Calu3 (cell line): ENCODE measurements at regions of chr4 and their contacts with region 1.

Region 1: GRCh38 chr4:34826660-34827059 is 1417.7 kb downstream of the ARAP2 start:
- DNase-seq: no peak
- H3K4me3 Mint-ChIP-seq: no peak overlapping the region
- H3K27ac Mint-ChIP-seq: no peak overlapping the region
- H3K4me1 Mint-ChIP-seq: no peaks in the 10 kb centered on the region
- H3K27me3 Mint-ChIP-seq: no peaks in the 10 kb centered on the region
- CTCF ChIP-seq: no peak

Region 2: GRCh38 chr4:34676390-34676789 is 150.3 kb before region 1 on chr4:
- CTCF ChIA-PET with region 1: interaction called, 11 read pairs
- intact Hi-C with region 1: no loop called
- DNase-seq: no peak
- H3K4me3 Mint-ChIP-seq: no peak overlapping the region
- H3K27ac Mint-ChIP-seq: no peak overlapping the region
- H3K4me1 Mint-ChIP-seq: no peaks in the 10 kb centered on the region
- H3K27me3 Mint-ChIP-seq: no peaks in the 10 kb centered on the region
- CTCF ChIP-seq: no peak

Region 3: DNA sequence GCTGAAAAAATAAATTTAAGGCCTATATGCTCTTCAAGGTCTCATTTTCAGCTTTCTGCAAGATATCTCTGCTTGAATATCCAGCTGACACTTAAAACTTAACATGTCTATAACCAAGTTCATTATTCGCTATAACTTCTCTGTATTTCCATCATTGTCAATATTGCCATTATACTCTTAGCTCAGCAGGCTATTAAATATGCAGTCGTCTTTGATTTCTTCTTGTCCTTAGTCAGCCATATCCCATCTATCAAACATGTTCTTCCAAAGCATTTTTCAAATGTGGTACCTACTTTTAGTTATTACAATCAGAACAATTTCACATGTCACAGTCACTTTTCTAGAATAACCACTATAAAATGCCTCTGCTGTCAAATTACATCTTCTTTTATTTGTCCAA is 53.6 kb after region 1 on chr4:
- CTCF ChIA-PET with region 1: no interaction called
- intact Hi-C with region 1: no loop called
- DNase-seq: no peak
- H3K4me3 Mint-ChIP-seq: no peak overlapping the region
- H3K27ac Mint-ChIP-seq: no peak overlapping the region
- H3K4me1 Mint-ChIP-seq: no peaks in the 10 kb centered on the region
- H3K27me3 Mint-ChIP-seq: no peaks in the 10 kb centered on the region
- CTCF ChIP-seq: no peak

Region 4: DNA sequence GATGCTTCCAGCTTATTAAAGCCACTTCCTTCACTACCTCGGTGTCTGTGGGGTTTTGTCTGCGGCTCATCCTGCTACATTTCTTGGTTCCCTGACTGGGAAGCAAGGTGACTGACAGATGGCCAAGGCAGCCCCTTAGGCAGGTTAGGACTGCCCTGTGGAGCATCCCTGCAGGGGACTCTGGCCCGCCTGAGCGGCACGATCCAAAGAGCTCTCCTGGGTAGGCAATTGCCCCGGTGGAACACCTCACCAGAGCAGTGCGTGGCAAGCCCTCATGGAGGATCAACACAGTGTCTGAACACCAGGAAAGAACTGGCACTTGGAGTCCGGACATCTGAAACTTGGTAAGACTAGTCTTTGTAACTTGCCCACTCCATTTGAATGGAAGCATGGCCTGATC is 274.3 kb after region 1 on chr4:
- CTCF ChIA-PET with region 1: no interaction called
- intact Hi-C with region 1: no loop called
- DNase-seq: no peak
- H3K4me3 Mint-ChIP-seq: no peak overlapping the region
- H3K27ac Mint-ChIP-seq: no peak overlapping the region
- H3K4me1 Mint-ChIP-seq: no peaks in the 10 kb centered on the region
- H3K27me3 Mint-ChIP-seq: no peaks in the 10 kb centered on the region
- CTCF ChIP-seq: no peak